ENCODE measurements at regions of chr2 and their contacts with region 1.

Region 1: GRCh38 chr2:46364797-46365457 is 67.7 kb downstream of the EPAS1 start:
- DNase-seq: peak in 6 of 9 donors; percentile 20 to 64 (median 56)
- ATAC-seq: peak; percentile 52
- H3K4me3 ChIP-seq: no peak overlapping the region
- H3K4me3 Mint-ChIP-seq: peak overlapping the region in 1 of 10 donors; percentile 18
- H3K27ac ChIP-seq: no peak overlapping the region
- H3K27ac Mint-ChIP-seq: peak overlapping the region in 1 of 9 donors; percentile 10
- H3K4me1 ChIP-seq: peaks cover 7 to 29% of the 10 kb centered on the region in 2 donors
- H3K4me1 Mint-ChIP-seq: peaks cover 20 to 46% (median 41%) of the 10 kb centered on the region in 7 donors
- H3K27me3 ChIP-seq: no peaks in the 10 kb centered on the region
- H3K27me3 Mint-ChIP-seq: peaks cover 0 to 5% (median 0%) of the 10 kb centered on the region in 5 donors

Region 2: GRCh38 chr2:45993476-45993991 is 371.4 kb before region 1 on chr2:
- CTCF ChIA-PET with region 1: no interaction called
- POLR2A ChIA-PET with region 1: no interaction called
- intact Hi-C with region 1: loop called (anchors 1 kb)
- DNase-seq: peak in 8 of 9 donors; percentile 46 to 75 (median 64)
- ATAC-seq: peak; percentile 75
- H3K4me3 ChIP-seq: no peak overlapping the region
- H3K4me3 Mint-ChIP-seq: no peak overlapping the region
- H3K27ac ChIP-seq: no peak overlapping the region
- H3K27ac Mint-ChIP-seq: peak overlapping the region in 1 of 9 donors; percentile 36
- H3K4me1 ChIP-seq: no peaks in the 10 kb centered on the region
- H3K4me1 Mint-ChIP-seq: peaks cover 0 to 10% (median 6%) of the 10 kb centered on the region in 7 donors
- H3K27me3 ChIP-seq: no peaks in the 10 kb centered on the region
- H3K27me3 Mint-ChIP-seq: peaks cover 0 to 3% (median 0%) of the 10 kb centered on the region in 5 donors

Region 3: DNA sequence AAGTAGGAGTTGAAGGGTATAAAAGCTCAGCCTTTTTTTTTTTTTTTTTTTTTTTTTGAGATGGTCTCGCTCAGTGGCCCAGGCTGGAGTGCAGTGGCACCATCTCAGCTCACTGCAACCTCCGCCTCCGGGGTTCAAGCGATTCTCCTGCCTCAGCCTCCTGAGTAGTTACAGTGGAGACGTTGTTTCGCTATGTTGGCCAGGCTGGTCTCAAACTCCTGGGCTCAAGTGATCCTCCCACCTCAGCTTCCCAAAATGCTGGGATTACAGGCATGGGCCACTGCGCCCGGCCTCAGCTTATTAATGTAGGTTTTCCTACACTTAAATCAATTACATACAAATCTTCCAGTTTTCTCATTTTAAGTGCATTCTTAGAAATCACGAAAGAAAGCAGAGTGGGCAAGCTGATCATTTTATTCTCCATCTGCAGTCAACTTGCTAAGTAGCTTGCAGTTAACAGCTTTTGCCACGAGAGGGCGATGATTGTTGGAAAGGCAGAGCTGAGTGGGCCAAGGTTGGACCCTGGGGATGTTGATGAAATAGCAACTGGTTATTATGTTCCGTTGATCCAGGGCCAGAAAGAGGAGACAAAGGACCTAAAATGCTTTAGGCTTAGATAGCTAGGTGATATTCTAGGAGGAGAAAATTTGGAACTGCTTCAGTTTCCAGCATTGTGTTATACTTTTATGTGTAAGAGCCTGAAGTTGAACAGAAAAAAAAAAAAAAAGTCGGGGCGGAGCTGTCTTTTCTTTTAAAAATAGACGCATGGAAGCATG is 302.1 kb before region 1 on chr2:
- CTCF ChIA-PET with region 1: interaction called, 19 read pairs
- POLR2A ChIA-PET with region 1: no interaction called
- intact Hi-C with region 1: loop called (anchors 1 kb)
- DNase-seq: peak; percentile 14 to 63 (median 50)
- ATAC-seq: peak; percentile 73
- H3K4me3 ChIP-seq: no peak overlapping the region
- H3K4me3 Mint-ChIP-seq: no peak overlapping the region
- H3K27ac ChIP-seq: no peak overlapping the region
- H3K27ac Mint-ChIP-seq: no peak overlapping the region
- H3K4me1 ChIP-seq: peaks cover 0 to 4% of the 10 kb centered on the region in 2 donors
- H3K4me1 Mint-ChIP-seq: peaks cover 0 to 18% (median 0%) of the 10 kb centered on the region in 7 donors
- H3K27me3 ChIP-seq: no peaks in the 10 kb centered on the region
- H3K27me3 Mint-ChIP-seq: peaks cover 0 to 2% (median 0%) of the 10 kb centered on the region in 5 donors

Region 4: GRCh38 chr2:46239847-46240181 is 125.1 kb before region 1 on chr2:
- CTCF ChIA-PET with region 1: no interaction called
- POLR2A ChIA-PET with region 1: no interaction called
- intact Hi-C with region 1: loop called in 1 of 2 experiments (anchors 5 kb)
- DNase-seq: peak; percentile 15 to 67 (median 62)
- ATAC-seq: peak; percentile 92
- H3K4me3 ChIP-seq: no peak overlapping the region
- H3K4me3 Mint-ChIP-seq: peak overlapping the region in 7 of 10 donors; percentile 10 to 76 (median 49)
- H3K27ac ChIP-seq: peak overlapping the region; percentile 36
- H3K27ac Mint-ChIP-seq: peak overlapping the region; percentile 79 to 94 (median 88)
- H3K4me1 ChIP-seq: peaks cover 17 to 21% of the 10 kb centered on the region in 2 donors
- H3K4me1 Mint-ChIP-seq: peaks cover 16 to 52% (median 41%) of the 10 kb centered on the region in 7 donors
- H3K27me3 ChIP-seq: no peaks in the 10 kb centered on the region
- H3K27me3 Mint-ChIP-seq: peaks cover 0 to 2% (median 0%) of the 10 kb centered on the region in 5 donors

Region 5: DNA sequence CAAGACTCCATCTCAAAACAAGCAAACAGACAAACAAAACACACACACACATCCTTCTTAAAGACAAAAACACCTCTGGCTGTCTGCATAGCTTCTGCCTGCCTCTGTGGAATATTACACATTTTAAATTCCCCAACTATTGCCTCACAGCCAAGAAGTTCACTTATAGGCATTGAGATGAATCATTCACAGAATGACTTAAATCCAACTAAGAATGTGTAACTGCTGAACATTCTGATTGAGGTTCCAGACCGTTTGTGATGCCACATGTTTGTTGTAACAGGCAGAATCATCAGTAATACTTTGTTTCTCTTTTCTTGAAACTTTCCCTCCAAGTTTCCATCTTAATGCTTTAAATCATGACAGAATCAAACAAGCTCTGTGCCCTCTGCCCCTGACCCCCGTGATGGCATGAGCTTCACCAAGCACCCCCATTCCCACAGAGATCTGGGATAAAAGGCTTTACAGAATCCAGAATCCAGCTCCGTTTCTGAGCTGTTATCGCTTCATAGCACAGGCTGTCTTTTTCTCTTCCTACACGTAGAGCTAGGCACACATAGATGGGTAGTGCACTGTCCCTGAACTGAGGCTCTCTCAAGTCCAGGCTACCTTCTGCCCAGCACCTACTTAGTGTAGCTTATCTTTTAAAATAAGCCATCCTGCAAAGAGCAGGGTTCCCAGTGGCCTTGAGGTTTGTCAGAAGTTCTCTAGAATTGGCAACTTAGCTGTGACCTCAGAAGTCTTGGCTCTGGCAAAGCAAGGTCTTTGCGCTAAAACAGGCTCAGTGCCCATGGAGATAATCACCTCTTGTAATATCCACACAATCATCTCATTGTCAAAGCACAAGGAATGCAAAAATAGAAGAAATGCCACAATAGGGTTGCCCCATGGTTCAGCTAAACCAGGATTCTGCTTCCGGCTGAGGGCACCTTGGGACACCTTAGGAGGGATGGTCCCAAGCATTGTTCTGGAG is 34.8 kb before region 1 on chr2:
- CTCF ChIA-PET with region 1: interaction called, 3 read pairs
- POLR2A ChIA-PET with region 1: interaction called, 3 read pairs
- intact Hi-C with region 1: loop called in 1 of 2 experiments (anchors 5 kb)
- DNase-seq: no peak
- ATAC-seq: no peak
- H3K4me3 ChIP-seq: no peak overlapping the region
- H3K4me3 Mint-ChIP-seq: no peak overlapping the region
- H3K27ac ChIP-seq: no peak overlapping the region
- H3K27ac Mint-ChIP-seq: no peak overlapping the region
- H3K4me1 ChIP-seq: no peaks in the 10 kb centered on the region
- H3K4me1 Mint-ChIP-seq: peaks cover 7 to 25% (median 15%) of the 10 kb centered on the region in 7 donors
- H3K27me3 ChIP-seq: no peaks in the 10 kb centered on the region
- H3K27me3 Mint-ChIP-seq: peaks cover 0 to 30% (median 6%) of the 10 kb centered on the region in 5 donors

Region 6: GRCh38 chr2:46351750-46352138 is 13.2 kb before region 1 on chr2:
- CTCF ChIA-PET with region 1: interaction called, 4 read pairs
- POLR2A ChIA-PET with region 1: interaction called, 7 read pairs
- intact Hi-C with region 1: loop called (anchors 1 to 2 kb)
- DNase-seq: peak in 8 of 9 donors; percentile 54 to 85 (median 76)
- ATAC-seq: peak; percentile 80
- H3K4me3 ChIP-seq: peak overlapping the region; percentile 56
- H3K4me3 Mint-ChIP-seq: peak overlapping the region; percentile 72 to 93 (median 83)
- H3K27ac ChIP-seq: peak overlapping the region; percentile 46
- H3K27ac Mint-ChIP-seq: peak overlapping the region; percentile 81 to 97 (median 91)
- H3K4me1 ChIP-seq: peaks cover 29 to 70% of the 10 kb centered on the region in 2 donors
- H3K4me1 Mint-ChIP-seq: peaks cover 43 to 99% (median 91%) of the 10 kb centered on the region in 7 donors
- H3K27me3 ChIP-seq: no peaks in the 10 kb centered on the region
- H3K27me3 Mint-ChIP-seq: no peaks in the 10 kb centered on the region

Region 7: GRCh38 chr2:46610021-46610420 is 245.1 kb after region 1 on chr2:
- CTCF ChIA-PET with region 1: no interaction called
- POLR2A ChIA-PET with region 1: no interaction called
- intact Hi-C with region 1: no loop called
- DNase-seq: no peak
- ATAC-seq: no peak
- H3K4me3 ChIP-seq: no peak overlapping the region
- H3K4me3 Mint-ChIP-seq: no peak overlapping the region
- H3K27ac ChIP-seq: no peak overlapping the region
- H3K27ac Mint-ChIP-seq: no peak overlapping the region
- H3K4me1 ChIP-seq: peaks cover under 1 to 3% of the 10 kb centered on the region in 2 donors
- H3K4me1 Mint-ChIP-seq: peaks cover 7 to 16% (median 14%) of the 10 kb centered on the region in 7 donors
- H3K27me3 ChIP-seq: no peaks in the 10 kb centered on the region
- H3K27me3 Mint-ChIP-seq: no peaks in the 10 kb centered on the region

Region 8: DNA sequence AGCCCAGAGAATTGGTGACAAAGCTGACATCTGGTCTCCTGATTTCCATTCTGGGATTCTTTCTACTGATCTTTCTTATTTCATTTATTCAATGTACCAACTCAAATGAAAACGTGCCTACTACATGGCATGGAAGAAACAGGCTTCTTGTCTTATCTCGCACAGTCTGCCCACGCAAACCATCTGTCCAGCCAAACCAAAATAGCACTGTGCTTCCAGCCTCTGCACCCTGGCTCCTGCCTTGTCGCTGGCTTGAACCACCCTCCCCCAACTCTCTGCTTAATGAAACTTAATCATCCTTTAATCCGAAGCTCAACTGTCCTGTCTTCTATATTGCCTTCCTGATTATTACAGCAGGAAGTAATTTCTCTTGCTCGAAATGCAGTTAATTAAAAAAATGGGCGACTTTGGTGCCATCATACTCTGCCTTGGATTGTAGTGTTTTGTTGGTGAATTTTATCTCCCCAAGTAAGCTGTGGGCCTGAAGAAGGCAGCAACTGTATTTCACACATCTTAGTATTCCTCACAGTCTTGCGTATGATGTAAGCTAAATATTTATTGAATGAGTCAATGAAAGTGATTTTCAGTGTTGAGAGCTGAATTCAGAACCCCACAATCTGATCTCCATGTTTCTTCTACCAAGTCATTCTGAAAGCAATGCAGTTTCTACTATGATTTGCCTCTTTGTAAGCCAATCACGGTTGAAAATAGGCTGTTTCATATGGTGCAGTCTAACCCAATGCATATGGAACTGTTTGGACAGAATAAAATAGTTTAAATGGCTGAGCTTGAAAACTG is 305.3 kb after region 1 on chr2:
- CTCF ChIA-PET with region 1: no interaction called
- POLR2A ChIA-PET with region 1: no interaction called
- intact Hi-C with region 1: no loop called
- DNase-seq: no peak
- ATAC-seq: no peak
- H3K4me3 ChIP-seq: no peak overlapping the region
- H3K4me3 Mint-ChIP-seq: no peak overlapping the region
- H3K27ac ChIP-seq: no peak overlapping the region
- H3K27ac Mint-ChIP-seq: no peak overlapping the region
- H3K4me1 ChIP-seq: no peaks in the 10 kb centered on the region
- H3K4me1 Mint-ChIP-seq: no peaks in the 10 kb centered on the region
- H3K27me3 ChIP-seq: no peaks in the 10 kb centered on the region
- H3K27me3 Mint-ChIP-seq: peaks cover 12 to 26% (median 21%) of the 10 kb centered on the region in 5 donors